Activated CD4-positive, alpha-beta memory T cell treated with anti-CD3 and anti-CD28 coated beads, Interleukin-2, amount 10 ng/mL, durations not matched to agents 7 days and 5 days (primary cell): ENCODE measurements at regions of chr2 and their contacts with region 1.

Region 1: DNA sequence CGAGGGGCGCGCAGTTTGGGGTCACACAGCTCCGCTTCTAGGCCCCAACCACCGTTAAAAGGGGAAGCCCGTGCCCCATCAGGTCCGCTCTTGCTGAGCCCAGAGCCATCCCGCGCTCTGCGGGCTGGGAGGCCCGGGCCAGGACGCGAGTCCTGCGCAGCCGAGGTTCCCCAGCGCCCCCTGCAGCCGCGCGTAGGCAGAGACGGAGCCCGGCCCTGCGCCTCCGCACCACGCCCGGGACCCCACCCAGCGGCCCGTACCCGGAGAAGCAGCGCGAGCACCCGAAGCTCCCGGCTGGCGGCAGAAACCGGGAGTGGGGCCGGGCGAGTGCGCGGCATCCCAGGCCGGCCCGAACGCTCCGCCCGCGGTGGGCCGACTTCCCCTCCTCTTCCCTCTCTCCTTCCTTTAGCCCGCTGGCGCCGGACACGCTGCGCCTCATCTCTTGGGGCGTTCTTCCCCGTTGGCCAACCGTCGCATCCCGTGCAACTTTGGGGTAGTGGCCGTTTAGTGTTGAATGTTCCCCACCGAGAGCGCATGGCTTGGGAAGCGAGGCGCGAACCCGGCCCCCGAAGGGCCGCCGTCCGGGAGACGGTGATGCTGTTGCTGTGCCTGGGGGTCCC is at the start of gene ITGA4:
- DNase-seq: peak; percentile 90
- H3K4me3 Mint-ChIP-seq: peak within 1 kb of the TSS; percentile 90
- H3K27ac Mint-ChIP-seq: peak within 1 kb of the TSS; percentile 95
- H3K4me1 Mint-ChIP-seq: peaks cover 40% of the 10 kb centered on the region
- H3K27me3 Mint-ChIP-seq: no peaks in the 10 kb centered on the region
- total RNA-seq, gene ITGA4: 252 to 265 TPM

Region 2: DNA sequence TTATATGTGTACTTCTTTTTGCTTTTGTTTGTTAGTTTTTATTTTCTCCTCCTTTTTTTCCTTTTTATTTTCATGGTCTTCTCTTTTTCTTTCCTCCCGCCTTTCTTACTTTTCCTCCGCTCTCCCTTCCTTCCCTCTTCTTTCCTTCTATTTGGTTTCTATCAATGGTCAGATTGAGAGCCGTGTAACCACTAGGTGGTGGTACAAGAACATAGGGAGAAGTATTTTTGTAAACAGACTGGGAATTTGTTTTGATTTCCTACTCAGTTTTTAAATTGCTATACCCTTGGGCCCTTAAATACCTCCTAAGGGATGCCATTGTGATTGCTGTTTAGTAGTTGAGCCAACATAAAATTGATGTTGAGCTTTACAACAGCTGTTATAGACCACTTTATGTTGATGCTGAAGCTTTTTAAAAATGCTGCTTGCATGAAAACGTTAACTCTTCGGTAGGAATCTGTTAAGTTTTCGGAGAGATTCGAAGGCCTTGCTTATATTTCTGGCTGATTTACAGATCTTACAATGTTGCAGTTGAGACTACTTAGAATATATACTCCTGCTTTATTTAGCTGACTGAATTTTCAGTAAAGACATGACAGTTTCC is 352.6 kb before region 1 on chr2:
- CTCF ChIA-PET with region 1: interaction called, 35 read pairs
- POLR2A ChIA-PET with region 1: interaction called, 229 read pairs
- DNase-seq: no peak
- H3K4me3 Mint-ChIP-seq: peak overlapping the region; percentile 19
- H3K27ac Mint-ChIP-seq: peak overlapping the region; percentile 34
- H3K4me1 Mint-ChIP-seq: peaks cover 51% of the 10 kb centered on the region
- H3K27me3 Mint-ChIP-seq: no peaks in the 10 kb centered on the region

Region 3: GRCh38 chr2:181140414-181140813 is 316.8 kb before region 1 on chr2:
- CTCF ChIA-PET with region 1: interaction called, 5 read pairs
- POLR2A ChIA-PET with region 1: interaction called, 128 read pairs
- DNase-seq: no peak
- H3K4me3 Mint-ChIP-seq: peak overlapping the region; percentile 65
- H3K27ac Mint-ChIP-seq: peak overlapping the region; percentile 79
- H3K4me1 Mint-ChIP-seq: peaks cover 76% of the 10 kb centered on the region
- H3K27me3 Mint-ChIP-seq: no peaks in the 10 kb centered on the region

Region 4: DNA sequence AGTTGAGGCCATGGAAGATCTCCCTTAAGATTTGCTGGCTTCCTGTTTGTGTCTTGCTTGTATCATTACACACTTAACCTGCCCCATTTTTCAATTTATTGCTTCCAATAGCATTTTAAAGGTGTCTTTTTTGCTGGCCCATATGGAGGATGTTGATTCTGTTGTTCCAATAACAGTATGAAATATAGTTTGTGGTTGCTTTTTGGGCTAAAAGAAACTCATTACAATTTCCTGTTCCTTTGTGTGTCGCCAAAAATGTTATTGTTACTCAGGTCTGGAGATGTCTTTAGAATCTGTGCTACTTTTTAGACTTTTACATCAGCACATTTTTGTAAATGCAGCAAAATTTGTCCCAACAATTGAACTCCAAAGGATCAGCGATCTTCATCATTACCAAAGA is 234.0 kb before region 1 on chr2:
- CTCF ChIA-PET with region 1: interaction called, 3 read pairs
- POLR2A ChIA-PET with region 1: interaction called, 53 read pairs
- DNase-seq: no peak
- H3K4me3 Mint-ChIP-seq: peak overlapping the region; percentile 62
- H3K27ac Mint-ChIP-seq: peak overlapping the region; percentile 97
- H3K4me1 Mint-ChIP-seq: peaks cover 51% of the 10 kb centered on the region
- H3K27me3 Mint-ChIP-seq: no peaks in the 10 kb centered on the region

Region 5: DNA sequence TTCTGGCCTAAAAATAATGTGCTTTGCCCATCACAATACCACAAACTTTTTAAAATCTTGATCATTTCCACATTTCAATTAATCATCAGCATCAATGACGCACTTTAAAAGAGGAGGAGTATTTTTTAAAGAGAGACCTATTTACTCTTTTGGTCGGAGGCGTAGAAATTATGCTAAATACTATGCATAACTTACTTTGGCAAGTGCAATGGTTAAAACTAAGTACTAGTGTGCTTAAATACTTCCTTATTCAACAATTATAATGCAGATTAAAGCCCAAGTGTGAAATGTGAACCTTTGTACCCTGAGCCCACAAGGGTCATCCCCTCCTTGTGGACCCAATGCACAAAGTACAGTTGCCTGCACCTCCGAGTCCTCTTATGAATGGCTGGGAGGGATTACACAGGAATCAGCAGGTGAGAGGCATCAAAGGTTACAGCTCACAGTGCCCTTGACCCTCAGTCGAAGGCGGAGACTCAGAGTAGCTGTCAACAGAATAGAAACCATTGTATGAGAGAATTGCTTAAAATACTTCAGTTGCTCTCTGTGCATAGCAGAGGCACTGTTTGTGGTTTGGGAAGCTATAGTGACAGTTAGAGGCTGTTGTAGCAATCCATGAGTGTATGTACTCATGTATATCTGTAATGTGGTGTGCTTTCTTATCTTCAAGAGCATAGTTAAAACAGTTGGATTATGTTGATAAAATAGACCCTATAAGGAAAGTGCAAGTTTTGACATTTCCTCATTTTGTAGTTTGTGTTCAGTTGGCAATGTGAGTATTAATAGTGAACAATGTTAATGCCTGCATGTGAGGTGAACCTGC is 151.7 kb before region 1 on chr2:
- CTCF ChIA-PET with region 1: interaction called, 59 read pairs
- POLR2A ChIA-PET with region 1: interaction called, 611 read pairs
- DNase-seq: peak; percentile 72
- H3K4me3 Mint-ChIP-seq: peak overlapping the region; percentile 47
- H3K27ac Mint-ChIP-seq: peak overlapping the region; percentile 85
- H3K4me1 Mint-ChIP-seq: peaks cover 78% of the 10 kb centered on the region
- H3K27me3 Mint-ChIP-seq: no peaks in the 10 kb centered on the region

Region 6: DNA sequence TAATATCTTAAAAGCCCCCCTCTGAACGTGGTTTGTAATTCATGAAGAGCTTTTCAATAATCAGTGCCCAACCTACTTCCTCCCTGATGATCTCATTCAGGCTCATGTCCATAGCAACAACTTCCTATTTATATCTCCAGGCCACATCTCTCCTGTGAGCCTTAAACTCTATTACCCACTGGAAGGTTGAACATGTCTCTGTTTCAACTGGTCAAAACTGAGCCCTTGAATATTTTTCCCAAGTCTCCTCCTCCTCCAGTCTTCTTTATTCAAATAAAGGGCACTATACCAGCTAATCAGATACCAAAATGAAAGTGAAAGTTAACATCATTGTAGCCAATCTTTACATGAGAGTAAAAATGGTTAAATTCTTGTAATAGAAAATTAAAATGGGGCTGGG is 63.8 kb before region 1 on chr2:
- CTCF ChIA-PET with region 1: no interaction called
- POLR2A ChIA-PET with region 1: interaction called, 27 read pairs
- DNase-seq: no peak
- H3K4me3 Mint-ChIP-seq: peak overlapping the region; percentile 45
- H3K27ac Mint-ChIP-seq: peak overlapping the region; percentile 48
- H3K4me1 Mint-ChIP-seq: peaks cover 26% of the 10 kb centered on the region
- H3K27me3 Mint-ChIP-seq: no peaks in the 10 kb centered on the region

Region 7: GRCh38 chr2:181646415-181646987 is 189.3 kb after region 1 on chr2:
- CTCF ChIA-PET with region 1: no interaction called
- POLR2A ChIA-PET with region 1: no interaction called
- DNase-seq: no peak
- H3K4me3 Mint-ChIP-seq: no peak overlapping the region
- H3K27ac Mint-ChIP-seq: no peak overlapping the region
- H3K4me1 Mint-ChIP-seq: no peaks in the 10 kb centered on the region
- H3K27me3 Mint-ChIP-seq: peaks cover 41% of the 10 kb centered on the region